HEK293T (cell line): ENCODE measurements at regions of chr11 and their contacts with region 1.

Region 1: DNA sequence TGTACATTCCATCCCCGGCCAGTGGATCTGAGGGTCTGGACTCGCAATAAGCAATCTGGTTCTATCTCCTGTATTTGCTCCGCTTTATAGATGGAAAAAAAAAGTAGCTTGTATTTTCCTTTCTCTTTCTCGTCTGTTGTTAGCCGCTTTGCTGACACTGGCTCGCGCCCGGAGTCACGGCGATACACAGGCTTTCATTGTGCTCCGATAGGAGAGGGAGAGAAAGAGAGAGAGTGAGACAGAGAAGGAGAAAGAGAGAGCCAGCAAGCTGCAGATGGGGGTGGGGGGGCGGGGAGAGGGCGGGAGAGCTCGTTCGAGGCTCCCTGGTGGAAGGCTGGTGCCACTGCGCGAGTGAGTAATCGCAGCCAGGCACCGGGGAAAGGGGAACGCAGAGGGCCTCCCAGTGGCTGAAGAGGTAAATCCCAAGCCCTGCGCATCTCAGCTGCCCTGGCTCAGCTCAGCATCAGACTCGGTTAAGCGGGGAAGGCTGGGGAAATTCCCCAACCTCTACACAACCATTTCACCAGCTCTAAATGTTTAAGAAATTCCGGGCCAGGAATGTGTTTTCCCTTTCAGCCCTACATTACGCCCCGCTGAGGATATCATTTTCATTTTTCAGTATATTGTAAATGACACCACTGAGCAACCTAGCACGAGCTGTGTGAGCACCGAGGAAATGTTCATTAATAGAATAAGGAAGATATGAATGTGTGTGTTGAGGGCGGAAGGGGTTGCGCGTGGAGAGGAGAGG is at the start of gene MAML2:
- DNase-seq: peak; percentile 96

Region 2: GRCh38 chr11:96054870-96055705 is 288.0 kb before region 1 on chr11:
- CTCF ChIA-PET with region 1: interaction called, 32 read pairs
- POLR2A ChIA-PET with region 1: no interaction called
- DNase-seq: peak; percentile 22

Region 3: DNA sequence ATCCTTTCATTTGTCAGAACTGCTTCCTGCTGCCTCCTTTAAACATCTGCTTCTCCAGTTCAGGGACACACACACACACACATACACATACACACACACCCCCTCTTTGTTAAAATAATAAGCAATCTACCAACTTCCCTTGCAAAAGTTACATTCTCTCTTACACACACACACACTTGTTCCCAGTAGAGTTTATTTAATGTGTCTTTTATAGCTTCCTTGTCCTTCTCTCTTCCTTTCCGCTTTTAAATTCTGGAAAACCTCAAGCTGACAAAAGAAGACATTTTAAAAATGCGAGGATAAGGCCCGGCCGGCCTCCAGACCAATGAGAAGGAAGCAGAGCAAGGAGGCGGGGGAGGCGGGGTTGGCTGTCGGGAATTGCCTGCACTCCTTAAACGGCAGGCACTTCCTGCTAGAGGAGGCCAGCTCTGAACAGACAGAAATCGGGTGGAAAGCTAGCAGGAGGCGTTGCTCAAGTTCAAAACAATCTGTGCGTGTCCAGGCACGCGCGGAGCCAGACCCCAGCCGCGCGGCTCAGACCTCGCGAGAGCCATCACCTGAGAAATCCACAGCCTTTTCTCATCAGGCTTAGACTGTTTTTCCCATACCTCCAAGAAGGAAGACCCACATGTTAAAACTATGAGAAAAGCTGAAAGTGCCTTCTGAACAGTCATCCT is 100.0 kb before region 1 on chr11:
- CTCF ChIA-PET with region 1: interaction called, 20 read pairs
- POLR2A ChIA-PET with region 1: interaction called, 15 read pairs
- DNase-seq: peak; percentile 90

Region 4: GRCh38 chr11:96331699-96332116 is 11.4 kb before region 1 on chr11:
- CTCF ChIA-PET with region 1: interaction called, 17 read pairs
- POLR2A ChIA-PET with region 1: interaction called, 7 read pairs
- DNase-seq: no peak

Region 5: GRCh38 chr11:96389720-96390487 is 46.8 kb after region 1 on chr11 and contains the starts of genes CCDC82 and JRKL:
- CTCF ChIA-PET with region 1: interaction called, 4 read pairs
- POLR2A ChIA-PET with region 1: interaction called, 14 read pairs
- DNase-seq: peak; percentile 96

Region 6: DNA sequence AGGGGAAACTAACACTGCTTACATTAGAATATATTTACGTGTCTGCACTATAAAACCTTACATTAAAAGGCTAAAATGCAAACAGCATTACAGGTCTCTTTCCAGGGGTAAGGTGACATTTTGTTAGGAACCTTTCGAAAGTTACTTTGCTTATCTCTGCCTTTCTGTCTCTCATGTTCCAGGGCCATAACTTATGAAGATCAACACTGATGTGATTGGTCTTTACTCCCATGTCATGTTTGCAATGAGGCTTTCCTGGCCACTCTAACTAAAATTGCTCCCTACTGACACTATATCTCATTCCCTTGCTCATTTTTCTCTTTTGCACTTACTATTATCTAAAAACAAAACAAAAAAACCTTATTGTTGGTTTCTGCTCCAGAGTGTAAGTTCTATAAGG is 165.7 kb after region 1 on chr11:
- CTCF ChIA-PET with region 1: no interaction called
- POLR2A ChIA-PET with region 1: no interaction called
- DNase-seq: no peak